Right cardiac atrium (tissue), 5 donors: ENCODE measurements at regions of chr11 and their contacts with region 1.

Region 1: DNA sequence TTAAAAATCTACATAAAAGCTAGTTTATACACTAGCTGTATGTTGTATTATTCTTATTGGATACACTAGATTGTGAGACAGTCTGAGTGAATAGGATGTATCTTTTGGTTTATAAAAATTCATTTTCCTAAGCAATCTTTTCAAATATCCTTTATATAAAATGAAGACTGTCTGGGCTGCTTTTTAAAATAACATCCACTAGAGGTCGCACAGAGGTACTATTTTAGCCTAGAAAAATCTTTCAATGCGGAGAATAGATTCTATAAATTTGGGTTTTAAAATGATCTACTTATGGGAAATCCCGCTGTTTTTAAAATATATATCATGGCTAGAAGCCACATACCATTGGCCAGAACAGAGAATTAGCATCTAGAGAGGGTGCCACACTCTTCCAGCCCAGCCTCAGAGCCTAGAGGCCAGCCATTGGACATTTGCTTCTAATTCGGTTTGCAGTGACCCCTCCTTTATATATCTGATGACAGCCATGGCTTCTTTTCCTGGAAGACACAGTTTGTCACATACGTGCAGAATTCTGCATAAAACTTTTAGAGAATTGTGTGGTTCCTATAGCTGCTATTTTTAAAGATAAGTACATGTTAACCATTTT is 7.3 kb downstream of the C11orf97 start:
- DNase-seq: no peak
- ATAC-seq: peak in 1 of 2 donors; percentile 23
- H3K4me3 ChIP-seq: no peak overlapping the region
- H3K27ac ChIP-seq: no peak overlapping the region
- H3K4me1 ChIP-seq: no peaks in the 10 kb centered on the region
- H3K27me3 ChIP-seq: no peaks in the 10 kb centered on the region

Region 2: GRCh38 chr11:94459576-94459975 is 60.0 kb before region 1 on chr11:
- intact Hi-C with region 1: no loop called
- DNase-seq: no peak
- ATAC-seq: no peak
- H3K4me3 ChIP-seq: no peak overlapping the region
- H3K27ac ChIP-seq: no peak overlapping the region
- H3K4me1 ChIP-seq: no peaks in the 10 kb centered on the region
- H3K27me3 ChIP-seq: no peaks in the 10 kb centered on the region

Region 3: DNA sequence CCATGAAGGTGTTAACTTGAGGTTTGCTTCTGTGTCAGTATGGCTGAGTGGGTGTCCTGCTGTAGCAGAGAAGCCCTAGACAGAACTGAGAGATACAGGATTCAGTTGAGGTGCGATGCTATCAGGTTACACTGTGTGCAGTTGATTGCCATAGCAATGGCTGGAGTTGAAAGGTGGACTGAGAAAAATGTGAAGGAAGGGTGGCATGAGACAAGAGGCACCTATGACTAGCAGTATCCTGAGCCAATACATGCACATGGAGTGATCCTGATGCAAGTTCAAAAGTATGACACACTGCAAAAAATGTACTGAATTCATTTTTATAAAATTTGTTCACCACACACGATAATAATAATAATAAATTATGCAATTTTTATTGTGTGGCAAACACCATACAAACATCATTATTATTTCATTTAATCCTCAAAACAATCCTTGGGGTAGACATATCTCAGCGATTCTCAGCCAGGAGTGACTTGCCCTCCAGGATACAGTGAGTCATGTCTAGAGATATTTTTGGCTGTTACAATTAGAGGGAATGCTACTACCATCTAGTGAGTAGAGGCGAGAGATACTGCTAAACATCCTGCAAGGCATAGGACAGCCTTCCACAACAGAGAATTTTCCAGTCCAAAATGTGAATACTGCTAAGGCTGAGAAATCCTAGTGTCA is 43.7 kb after region 1 on chr11:
- intact Hi-C with region 1: loop called in 2 of 4 experiments (anchors 5 kb)
- DNase-seq: no peak
- ATAC-seq: peak; percentile 95 to 97
- H3K4me3 ChIP-seq: no peak overlapping the region
- H3K27ac ChIP-seq: no peak overlapping the region
- H3K4me1 ChIP-seq: no peaks in the 10 kb centered on the region
- H3K27me3 ChIP-seq: no peaks in the 10 kb centered on the region

Region 4: DNA sequence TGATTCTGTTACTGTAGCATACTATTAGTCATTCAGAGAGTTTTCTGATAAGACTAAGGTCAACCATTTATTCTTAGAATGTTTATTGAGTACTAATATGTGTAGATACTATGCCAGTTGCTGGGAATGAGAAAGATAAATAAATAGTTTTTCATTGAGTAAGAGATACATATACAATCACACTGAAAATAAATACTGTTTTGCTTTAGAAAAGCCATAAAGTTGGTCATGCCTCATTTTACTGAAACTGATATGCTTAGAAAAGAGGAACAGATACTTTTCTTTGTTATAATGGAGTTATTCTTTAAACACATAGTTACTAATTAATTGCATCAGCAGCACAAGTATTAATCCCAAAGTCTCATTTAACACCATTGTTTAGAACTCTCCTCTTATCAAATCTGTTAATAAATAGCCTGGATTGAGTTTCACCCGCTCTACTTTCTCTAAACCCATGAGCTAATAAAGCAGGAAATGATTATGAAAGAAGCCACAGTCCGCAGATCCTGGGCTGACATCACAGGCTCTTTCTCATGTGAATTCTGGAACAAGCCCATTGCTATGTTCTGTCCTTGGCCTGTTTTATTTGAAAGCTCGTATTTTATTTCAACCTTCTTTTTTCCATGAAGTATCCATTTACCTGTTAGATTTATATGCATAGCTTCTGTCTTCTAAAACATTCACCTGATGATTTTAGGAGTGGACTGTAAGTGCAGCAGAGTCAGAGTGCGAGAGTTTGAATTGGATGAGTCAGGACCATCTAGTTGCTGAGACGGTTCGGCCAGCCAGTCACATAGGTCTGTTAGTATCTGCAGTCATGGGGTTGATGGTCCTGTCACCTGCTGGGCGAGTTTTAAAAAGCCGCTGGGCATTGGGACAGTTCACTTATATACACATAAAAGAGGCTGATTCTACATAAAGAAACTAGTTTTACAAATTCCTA is 83.1 kb after region 1 on chr11:
- intact Hi-C with region 1: loop called in 1 of 4 experiments (anchors 5 kb)
- DNase-seq: peak in 2 of 3 donors; percentile 59 to 72
- ATAC-seq: peak; percentile 71 to 91
- H3K4me3 ChIP-seq: no peak overlapping the region
- H3K27ac ChIP-seq: no peak overlapping the region
- H3K4me1 ChIP-seq: no peaks in the 10 kb centered on the region
- H3K27me3 ChIP-seq: no peaks in the 10 kb centered on the region